HEK293T (cell line): ENCODE measurements at regions of chr15 and their contacts with region 1.

Region 1: DNA sequence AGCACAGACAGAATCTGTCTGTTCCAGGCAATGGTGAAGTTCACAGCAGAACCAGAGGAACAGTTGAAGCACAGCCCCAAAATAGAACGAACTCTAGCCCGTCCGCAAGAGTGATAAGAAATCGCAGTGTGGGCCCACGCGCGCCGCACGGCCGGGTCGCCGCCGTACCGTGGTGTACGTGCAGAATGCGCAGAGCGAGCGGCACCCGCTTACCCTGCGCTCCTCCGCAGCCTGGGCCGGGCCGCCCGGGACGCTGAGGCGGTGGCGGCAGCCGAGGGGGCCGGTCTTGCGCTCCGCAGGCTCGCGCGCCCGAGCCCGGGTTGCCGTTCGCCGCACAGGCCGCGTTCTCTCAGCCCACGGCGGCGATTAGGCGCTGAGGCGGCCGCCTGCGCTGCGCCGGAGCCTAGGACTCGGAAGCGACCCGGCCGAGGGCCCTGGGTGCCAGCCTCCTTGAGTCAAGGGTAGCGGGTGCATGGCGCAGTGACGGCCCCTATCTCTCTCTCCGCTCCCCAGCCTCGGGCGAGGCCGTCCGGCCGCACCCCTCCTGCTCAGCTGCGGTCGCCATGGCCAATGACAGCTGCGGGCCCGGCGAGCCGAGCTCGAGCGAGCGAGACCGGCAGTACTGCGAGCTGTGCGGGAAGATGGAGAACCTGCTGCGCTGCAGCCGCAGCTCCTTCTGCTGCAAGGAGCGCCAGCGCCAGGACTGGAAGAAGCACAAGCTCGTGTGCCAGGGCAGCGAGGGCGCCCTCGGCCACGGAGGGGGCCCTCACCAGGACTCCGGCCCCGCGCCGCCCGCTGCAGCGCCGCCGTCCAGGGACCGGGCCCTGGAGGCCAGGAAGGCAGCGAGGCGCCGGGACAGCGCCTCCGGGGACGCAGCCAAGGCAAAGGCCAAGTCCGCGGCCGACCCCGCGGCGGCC is 20.5 kb downstream of the WDR73 start:
- DNase-seq: peak; percentile 38

Region 2: GRCh38 chr15:84552896-84553295 is 80.7 kb before region 1 on chr15:
- CTCF ChIA-PET with region 1: no interaction called
- POLR2A ChIA-PET with region 1: no interaction called
- DNase-seq: no peak

Region 3: GRCh38 chr15:84600851-84601838 is 32.4 kb before region 1 on chr15 and contains the start of gene ZSCAN2:
- CTCF ChIA-PET with region 1: interaction called, 12 read pairs
- POLR2A ChIA-PET with region 1: interaction called, 22 read pairs
- DNase-seq: peak; percentile 96

Region 4: DNA sequence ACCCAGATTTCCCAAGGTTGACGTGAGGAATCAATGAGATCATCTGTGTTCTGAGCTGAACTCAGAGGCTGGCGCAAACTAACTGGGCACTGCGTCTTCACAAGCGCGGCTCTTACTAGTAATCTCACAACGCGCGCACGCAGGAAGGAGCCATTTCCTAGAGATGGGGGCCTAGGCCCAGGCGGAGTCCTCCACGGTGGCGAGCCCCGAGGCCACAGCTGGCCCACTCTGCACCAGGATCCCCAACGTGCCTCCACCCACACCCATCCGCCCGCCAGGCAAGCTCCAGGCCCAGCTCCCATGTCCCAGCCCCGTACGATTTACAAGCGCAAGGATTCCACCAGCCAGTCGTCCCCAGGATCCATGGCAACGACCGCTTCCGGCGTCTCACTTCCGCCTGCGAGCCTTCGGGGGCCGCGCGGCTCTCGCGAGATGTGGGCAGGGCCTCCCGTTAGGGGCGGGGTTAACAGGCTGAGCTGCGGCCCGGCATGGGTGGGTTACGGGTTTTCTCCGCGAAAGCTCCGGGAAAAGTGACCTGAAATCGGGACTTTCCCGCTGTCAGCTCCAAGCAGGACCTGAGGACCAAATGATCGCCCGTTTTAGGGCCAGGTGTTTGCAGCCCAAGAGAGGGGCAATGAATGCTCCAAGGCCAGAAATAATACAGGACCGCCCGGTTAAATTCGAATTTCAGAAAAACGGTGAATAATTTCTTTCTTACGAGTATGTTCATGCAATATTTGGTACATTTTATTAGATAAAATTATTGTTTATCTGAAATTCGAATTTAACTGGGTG is 20.5 kb after region 1 on chr15 and contains the start of gene WDR73:
- CTCF ChIA-PET with region 1: interaction called, 3 read pairs
- POLR2A ChIA-PET with region 1: interaction called, 45 read pairs
- DNase-seq: peak; percentile 97

Region 5: GRCh38 chr15:84844964-84845363 is 211.4 kb after region 1 on chr15:
- CTCF ChIA-PET with region 1: no interaction called
- POLR2A ChIA-PET with region 1: no interaction called
- DNase-seq: no peak